Endothelial cell of umbilical vein (primary cell): ENCODE measurements at regions of chr17 and their contacts with region 1.

Region 1: GRCh38 chr17:76868176-76868668 is at the start of gene MGAT5B:
- DNase-seq: peak; percentile 66
- H3K4me3 ChIP-seq: no peak within 1 kb of the TSS
- H3K27ac ChIP-seq: peak within 1 kb of the TSS; percentile 10
- H3K4me1 ChIP-seq: peaks cover 32% of the 10 kb centered on the region
- H3K27me3 ChIP-seq: peaks cover 0 to 12% of the 10 kb centered on the region in 2 experiments
- CTCF ChIP-seq: peak; percentile 72 to 92
- POLR2A ChIP-seq: no peak
- total RNA-seq, gene MGAT5B: 2.1 and 2.3 TPM in 2 replicates

Region 2: DNA sequence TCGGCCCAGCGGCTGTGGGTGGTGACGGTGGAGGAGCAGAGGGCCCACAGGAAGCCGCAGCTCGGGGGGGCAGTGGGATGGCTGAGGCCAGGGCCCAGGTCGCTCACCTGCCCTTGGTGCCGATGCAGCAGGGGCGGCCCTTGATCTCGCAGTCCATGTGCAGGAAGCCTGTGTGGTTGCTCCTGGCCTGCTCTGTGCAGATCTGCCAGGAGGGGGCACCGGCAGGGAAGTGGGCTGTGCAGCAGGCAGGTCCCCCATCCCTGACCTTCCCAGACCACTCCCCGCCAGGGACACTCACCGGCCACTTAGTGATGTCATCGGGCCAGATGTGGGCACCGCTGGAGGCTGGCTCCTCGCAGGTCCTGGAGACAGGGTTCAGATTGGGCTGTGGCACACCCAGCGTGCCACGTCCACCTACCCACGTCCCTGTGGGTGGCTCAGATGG is 394.7 kb before region 1 on chr17:
- CTCF ChIA-PET with region 1: no interaction called
- POLR2A ChIA-PET with region 1: no interaction called
- dilution Hi-C with region 1: no loop called
- intact Hi-C with region 1: no loop called
- DNase-seq: no peak
- H3K4me3 ChIP-seq: no peak overlapping the region
- H3K27ac ChIP-seq: no peak overlapping the region
- H3K4me1 ChIP-seq: peaks cover 3% of the 10 kb centered on the region
- H3K27me3 ChIP-seq: no peaks in the 10 kb centered on the region
- CTCF ChIP-seq: peak in 1 of 2 donors; percentile 44
- POLR2A ChIP-seq: no peak

Region 3: DNA sequence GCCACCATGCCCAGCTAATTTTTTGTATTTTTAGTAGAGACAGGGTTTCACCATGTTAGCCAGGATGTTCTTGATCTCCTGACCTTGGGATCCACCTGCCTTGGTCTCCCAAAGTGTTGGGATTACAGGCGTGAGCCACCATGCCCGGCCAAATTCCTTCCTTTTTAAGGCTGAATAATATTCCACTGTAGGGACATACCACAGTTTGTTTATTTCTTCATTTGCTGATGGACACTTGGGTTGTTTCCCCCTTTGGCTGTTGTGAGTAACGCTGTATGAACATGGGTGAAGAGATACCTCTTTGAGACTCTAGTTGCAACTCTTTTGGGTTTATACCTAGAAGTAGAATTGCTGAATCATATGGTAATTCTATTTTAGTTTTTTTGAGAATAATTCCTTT is 13.1 kb before region 1 on chr17:
- CTCF ChIA-PET with region 1: interaction called, 12 read pairs
- POLR2A ChIA-PET with region 1: no interaction called
- dilution Hi-C with region 1: no loop called
- intact Hi-C with region 1: no loop called
- DNase-seq: no peak
- H3K4me3 ChIP-seq: no peak overlapping the region
- H3K27ac ChIP-seq: no peak overlapping the region
- H3K4me1 ChIP-seq: no peaks in the 10 kb centered on the region
- H3K27me3 ChIP-seq: peaks cover 0 to 2% of the 10 kb centered on the region in 2 experiments
- CTCF ChIP-seq: no peak
- POLR2A ChIP-seq: no peak

Region 4: GRCh38 chr17:76940738-76941350 is 72.6 kb after region 1 on chr17:
- CTCF ChIA-PET with region 1: interaction called, 18 read pairs
- POLR2A ChIA-PET with region 1: no interaction called
- dilution Hi-C with region 1: no loop called
- intact Hi-C with region 1: loop called (anchors 1 kb)
- DNase-seq: peak; percentile 8
- H3K4me3 ChIP-seq: no peak overlapping the region
- H3K27ac ChIP-seq: no peak overlapping the region
- H3K4me1 ChIP-seq: no peaks in the 10 kb centered on the region
- H3K27me3 ChIP-seq: no peaks in the 10 kb centered on the region
- CTCF ChIP-seq: peak; percentile 12 to 33
- POLR2A ChIP-seq: no peak

Region 5: DNA sequence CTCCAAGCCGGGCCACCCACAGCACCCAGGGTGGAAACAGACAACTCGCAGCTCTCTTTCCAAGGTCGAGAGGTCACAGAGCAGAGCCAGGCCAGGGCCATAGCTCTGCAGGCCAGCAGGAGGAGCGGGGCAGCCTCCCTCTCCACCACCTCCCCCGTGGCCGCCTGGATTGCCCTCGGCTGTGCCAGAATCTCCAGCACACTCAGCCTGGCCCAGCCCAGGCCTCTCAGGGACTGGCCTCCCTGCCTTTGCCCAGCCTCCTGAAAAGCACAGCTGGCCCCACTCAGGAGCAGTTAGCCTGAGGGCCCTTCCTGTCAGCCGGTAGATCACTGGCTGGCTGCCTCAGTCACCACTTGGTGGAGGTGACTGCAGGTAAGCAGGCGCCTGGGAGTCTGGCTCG is 186.7 kb after region 1 on chr17:
- CTCF ChIA-PET with region 1: interaction called, 334 read pairs
- POLR2A ChIA-PET with region 1: no interaction called
- dilution Hi-C with region 1: no loop called
- intact Hi-C with region 1: loop called (anchors 1 kb)
- DNase-seq: no peak
- H3K4me3 ChIP-seq: no peak overlapping the region
- H3K27ac ChIP-seq: no peak overlapping the region
- H3K4me1 ChIP-seq: no peaks in the 10 kb centered on the region
- H3K27me3 ChIP-seq: peaks cover 5 to 6% of the 10 kb centered on the region in 2 experiments
- CTCF ChIP-seq: no peak
- POLR2A ChIP-seq: no peak

Region 6: GRCh38 chr17:77088455-77089123 is 220.4 kb after region 1 on chr17:
- CTCF ChIA-PET with region 1: interaction called, 14 read pairs
- POLR2A ChIA-PET with region 1: no interaction called
- dilution Hi-C with region 1: no loop called
- intact Hi-C with region 1: no loop called
- DNase-seq: peak; percentile 96
- H3K4me3 ChIP-seq: peak overlapping the region; percentile 68 to 92 (median 73)
- H3K27ac ChIP-seq: peak overlapping the region; percentile 94
- H3K4me1 ChIP-seq: peaks cover 56% of the 10 kb centered on the region
- H3K27me3 ChIP-seq: no peaks in the 10 kb centered on the region
- CTCF ChIP-seq: peak; percentile 78 to 95
- POLR2A ChIP-seq: peak; percentile 80